Endothelial cell of umbilical vein (primary cell): ENCODE measurements at regions of chr19 and their contacts with region 1.

Region 1: DNA sequence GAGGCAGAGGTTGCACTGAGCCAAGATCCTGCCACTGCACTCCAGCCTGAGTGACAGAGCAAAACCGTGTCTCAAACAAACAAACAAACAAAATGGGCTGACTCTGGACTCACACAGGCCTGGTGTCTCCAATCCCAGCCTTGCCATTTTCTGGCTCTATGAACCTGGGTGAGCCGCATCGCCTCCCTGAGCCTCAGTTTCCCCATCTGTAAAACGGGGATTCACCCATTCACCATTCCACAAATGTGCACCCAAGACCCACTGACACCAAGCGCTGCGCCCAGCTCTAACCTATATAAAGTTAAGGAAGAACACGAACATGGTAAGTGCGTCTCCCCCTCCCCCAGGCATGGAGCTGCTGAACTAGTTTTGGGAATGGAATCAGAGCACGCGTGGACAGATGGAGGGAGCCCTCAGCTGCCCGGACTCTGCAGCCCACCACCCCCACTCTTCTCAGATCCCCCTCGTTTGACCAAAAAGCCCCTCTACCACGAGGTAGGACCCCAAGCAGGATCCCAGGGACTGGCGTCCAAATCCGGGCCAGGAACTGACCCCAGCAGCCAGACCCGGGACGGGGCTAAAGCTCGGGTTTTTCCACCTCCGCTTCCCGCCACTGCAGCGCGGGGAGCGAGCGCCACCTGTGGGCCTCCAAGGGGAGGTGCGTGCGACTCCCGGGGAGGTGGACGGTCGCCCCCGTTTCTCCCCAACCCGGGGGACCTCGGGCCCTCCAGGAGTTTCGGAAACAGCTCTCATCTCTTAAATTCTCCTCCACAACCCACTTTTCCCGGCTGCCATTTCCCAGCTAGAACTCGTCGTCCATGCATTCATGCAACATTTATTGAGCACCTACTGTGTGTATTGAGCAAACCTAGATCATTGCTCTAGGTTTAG is 33.0 kb upstream of the ADGRE5 start:
- DNase-seq: peak; percentile 37
- H3K4me3 ChIP-seq: no peak overlapping the region
- H3K27ac ChIP-seq: no peak overlapping the region
- H3K4me1 ChIP-seq: no peaks in the 10 kb centered on the region
- H3K27me3 ChIP-seq: peaks cover 4% of the 10 kb centered on the region in 2 experiments
- CTCF ChIP-seq: peak; percentile 97 to 99
- POLR2A ChIP-seq: no peak

Region 2: DNA sequence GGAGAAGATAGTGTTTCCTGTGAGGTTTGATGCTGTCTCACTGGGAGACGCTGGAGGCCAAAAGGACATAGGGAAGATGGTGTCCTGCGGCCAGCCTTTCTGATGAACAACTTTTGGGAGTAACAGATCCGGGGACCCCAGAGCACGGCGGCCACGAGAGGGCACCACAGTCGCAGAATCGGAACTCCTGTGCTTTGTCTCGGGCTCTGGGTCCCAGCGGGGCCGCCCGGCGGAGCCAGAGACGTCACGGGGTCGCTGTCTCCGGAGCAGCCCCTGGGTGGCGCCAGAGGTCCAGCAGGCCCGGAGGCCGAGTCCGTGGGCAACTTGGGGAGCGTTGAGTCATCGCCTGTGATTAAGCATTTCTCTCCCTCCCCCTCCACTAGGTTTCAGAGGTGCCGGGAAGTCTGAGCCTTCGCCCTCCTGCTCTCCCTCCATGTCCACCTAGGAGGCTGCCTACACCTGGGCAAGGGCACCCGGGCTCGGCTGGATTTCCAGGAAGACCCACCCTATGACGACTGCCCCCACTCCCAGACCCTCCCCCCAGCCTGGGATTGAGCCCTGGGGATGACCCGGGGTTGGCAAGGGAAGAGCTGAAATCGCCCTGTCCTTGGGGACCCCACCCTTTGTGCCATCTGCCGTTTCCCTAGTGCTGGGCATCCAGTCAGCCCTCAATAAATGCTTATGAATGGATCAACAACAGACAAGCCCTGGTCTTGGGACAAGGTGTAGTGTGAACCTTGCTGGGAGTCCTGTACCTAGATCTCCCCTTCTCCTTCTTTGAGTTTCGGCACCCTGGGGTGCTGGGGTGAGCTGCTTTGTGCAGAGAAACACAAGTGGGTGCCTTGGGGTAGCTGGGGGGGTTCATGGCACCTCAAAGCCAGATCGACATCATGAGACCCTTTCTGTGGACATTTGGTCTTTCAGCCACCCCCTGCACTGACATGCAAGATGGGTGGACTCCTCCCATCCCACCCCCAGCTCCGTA is 467.9 kb before region 1 on chr19:
- CTCF ChIA-PET with region 1: interaction called, 3 read pairs
- POLR2A ChIA-PET with region 1: no interaction called
- dilution Hi-C with region 1: no loop called
- intact Hi-C with region 1: loop called (anchors 5 kb)
- DNase-seq: peak; percentile 96
- H3K4me3 ChIP-seq: peak overlapping the region in 1 of 3 experiments; percentile 4
- H3K27ac ChIP-seq: peak overlapping the region; percentile 78
- H3K4me1 ChIP-seq: peaks cover 5% of the 10 kb centered on the region
- H3K27me3 ChIP-seq: no peaks in the 10 kb centered on the region
- CTCF ChIP-seq: peak; percentile 100
- POLR2A ChIP-seq: no peak

Region 3: DNA sequence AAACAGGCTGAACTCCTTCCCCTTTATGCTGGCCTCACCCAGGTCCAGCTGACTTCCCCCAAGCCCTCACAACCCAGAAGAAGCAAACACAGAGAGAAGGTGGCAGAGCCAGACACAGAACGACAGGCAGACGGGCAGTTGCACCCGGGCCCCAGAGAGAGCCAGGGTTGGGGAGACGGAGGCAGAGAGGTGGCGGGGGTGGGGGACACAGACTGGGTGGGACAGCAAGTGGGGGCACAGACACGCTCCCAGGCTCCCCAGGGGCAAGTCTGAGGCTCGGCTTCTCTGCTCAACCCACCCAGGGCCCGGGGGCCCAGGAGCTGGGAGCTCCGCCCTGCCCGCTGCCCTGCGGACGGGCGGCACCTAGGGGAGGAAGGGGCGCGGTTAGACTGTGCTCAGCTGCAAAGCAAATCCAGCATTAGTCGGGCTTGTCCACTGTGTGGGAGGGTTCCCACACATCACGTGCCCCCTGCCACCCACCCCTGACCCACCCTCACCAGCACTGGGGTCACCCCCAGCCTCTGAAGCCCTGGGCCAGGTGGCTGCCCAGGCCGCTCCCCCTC is 180.6 kb before region 1 on chr19:
- CTCF ChIA-PET with region 1: interaction called, 12 read pairs
- POLR2A ChIA-PET with region 1: no interaction called
- dilution Hi-C with region 1: no loop called
- intact Hi-C with region 1: no loop called
- DNase-seq: no peak
- H3K4me3 ChIP-seq: no peak overlapping the region
- H3K27ac ChIP-seq: no peak overlapping the region
- H3K4me1 ChIP-seq: no peaks in the 10 kb centered on the region
- H3K27me3 ChIP-seq: no peaks in the 10 kb centered on the region
- CTCF ChIP-seq: no peak
- POLR2A ChIP-seq: no peak

Region 4: DNA sequence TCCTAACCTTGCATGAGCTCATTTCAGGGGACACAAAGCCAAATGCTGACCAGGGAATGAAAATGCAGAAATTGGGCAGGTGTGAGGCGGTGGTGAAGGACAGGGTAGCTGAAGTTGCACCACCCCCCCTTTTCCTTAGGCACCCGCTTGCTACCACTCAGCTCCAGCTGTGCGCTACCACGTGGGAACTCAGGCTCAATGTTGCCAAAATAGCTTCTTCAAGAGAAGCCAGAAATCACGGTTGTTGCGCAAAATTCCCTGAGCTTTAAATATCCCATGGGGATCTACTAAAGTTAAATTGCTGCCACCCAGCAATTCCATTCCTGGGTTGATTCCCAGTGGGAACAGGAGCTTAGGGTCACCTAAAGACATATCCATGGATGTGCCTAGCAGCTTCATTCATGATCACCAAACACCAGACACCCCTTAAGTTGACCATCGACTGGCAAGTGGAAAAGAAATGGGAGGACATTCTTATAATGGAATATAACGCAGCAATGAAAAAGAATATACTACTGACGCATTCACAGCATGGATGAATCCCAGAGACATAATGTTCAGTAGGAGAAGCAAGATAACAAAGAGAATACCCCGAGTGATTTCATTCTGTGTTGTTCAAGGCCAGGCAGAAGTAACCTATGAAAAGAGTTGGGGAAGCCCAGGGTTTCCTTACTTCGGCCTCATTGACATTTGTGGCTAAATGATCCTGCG is 129.5 kb before region 1 on chr19:
- CTCF ChIA-PET with region 1: interaction called, 26 read pairs
- POLR2A ChIA-PET with region 1: no interaction called
- dilution Hi-C with region 1: no loop called
- intact Hi-C with region 1: no loop called
- DNase-seq: no peak
- H3K4me3 ChIP-seq: no peak overlapping the region
- H3K27ac ChIP-seq: no peak overlapping the region
- H3K4me1 ChIP-seq: no peaks in the 10 kb centered on the region
- H3K27me3 ChIP-seq: no peaks in the 10 kb centered on the region
- CTCF ChIP-seq: no peak
- POLR2A ChIP-seq: no peak

Region 5: GRCh38 chr19:14363183-14364097 is 15.2 kb after region 1 on chr19:
- CTCF ChIA-PET with region 1: interaction called, 15 read pairs
- POLR2A ChIA-PET with region 1: interaction called, 3 read pairs
- dilution Hi-C with region 1: no loop called
- intact Hi-C with region 1: no loop called
- DNase-seq: peak; percentile 38
- H3K4me3 ChIP-seq: peak overlapping the region in 2 of 3 experiments; percentile 2 to 3
- H3K27ac ChIP-seq: no peak overlapping the region
- H3K4me1 ChIP-seq: peaks cover 5% of the 10 kb centered on the region
- H3K27me3 ChIP-seq: no peaks in the 10 kb centered on the region
- CTCF ChIP-seq: no peak
- POLR2A ChIP-seq: no peak